ENCODE measurements at regions of chr1 and their contacts with region 1.

Region 1: DNA sequence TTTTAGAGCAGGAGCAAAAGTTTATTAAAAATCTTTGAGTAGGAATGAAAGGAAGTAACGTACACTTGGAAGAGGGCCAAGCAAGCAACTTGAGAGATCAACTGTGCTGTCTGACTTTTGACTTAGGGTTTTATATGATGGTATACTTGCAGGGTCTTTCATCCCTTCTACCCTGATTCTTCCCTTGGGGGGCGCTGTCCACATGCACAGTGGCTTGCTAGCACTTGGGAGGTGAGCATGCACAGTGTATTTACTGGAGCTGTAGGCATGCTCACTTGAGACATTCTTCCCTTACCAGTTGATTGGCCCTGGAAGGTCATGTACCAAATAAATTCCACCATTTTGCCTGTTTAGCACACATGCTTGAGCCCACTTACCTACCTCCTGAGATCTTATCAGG is 1001.3 kb upstream of the ADGRL2 start:
- DNase-seq: no peak
- ATAC-seq: no peak
- H3K4me3 ChIP-seq: no peak overlapping the region
- H3K27ac ChIP-seq: no peak overlapping the region
- H3K4me1 ChIP-seq: no peaks in the 10 kb centered on the region
- H3K27me3 ChIP-seq: no peaks in the 10 kb centered on the region
- CTCF ChIP-seq: no peak

Region 2: GRCh38 chr1:78972723-78973122 is 1826.7 kb before region 1 on chr1:
- CTCF ChIA-PET with region 1: no interaction called
- POLR2A ChIA-PET with region 1: no interaction called
- intact Hi-C with region 1: loop called (anchors 10 kb)
- DNase-seq: no peak
- ATAC-seq: no peak
- H3K4me3 ChIP-seq: no peak overlapping the region
- H3K27ac ChIP-seq: no peak overlapping the region
- H3K4me1 ChIP-seq: no peaks in the 10 kb centered on the region
- H3K27me3 ChIP-seq: no peaks in the 10 kb centered on the region
- CTCF ChIP-seq: no peak